ENCODE measurements at regions of chr15 and their contacts with region 1.

Region 1: GRCh38 chr15:57732526-57733331 is 26.2 kb downstream of the POLR2M start:
- DNase-seq: peak; percentile 55
- CTCF ChIP-seq: peak; percentile 85

Region 2: GRCh38 chr15:57706405-57707209 is 26.1 kb before region 1 on chr15 and contains the start of gene POLR2M:
- CTCF ChIA-PET with region 1: interaction called, 28 read pairs
- POLR2A ChIA-PET with region 1: no interaction called
- DNase-seq: peak; percentile 89
- CTCF ChIP-seq: no peak

Region 3: GRCh38 chr15:57720867-57721266 is 11.9 kb before region 1 on chr15:
- CTCF ChIA-PET with region 1: interaction called, 33 read pairs
- POLR2A ChIA-PET with region 1: no interaction called
- DNase-seq: no peak
- CTCF ChIP-seq: no peak

Region 4: GRCh38 chr15:57751177-57751800 is 18.6 kb after region 1 on chr15:
- CTCF ChIA-PET with region 1: interaction called, 93 read pairs
- POLR2A ChIA-PET with region 1: no interaction called
- DNase-seq: peak; percentile 26
- CTCF ChIP-seq: peak; percentile 43

Region 5: DNA sequence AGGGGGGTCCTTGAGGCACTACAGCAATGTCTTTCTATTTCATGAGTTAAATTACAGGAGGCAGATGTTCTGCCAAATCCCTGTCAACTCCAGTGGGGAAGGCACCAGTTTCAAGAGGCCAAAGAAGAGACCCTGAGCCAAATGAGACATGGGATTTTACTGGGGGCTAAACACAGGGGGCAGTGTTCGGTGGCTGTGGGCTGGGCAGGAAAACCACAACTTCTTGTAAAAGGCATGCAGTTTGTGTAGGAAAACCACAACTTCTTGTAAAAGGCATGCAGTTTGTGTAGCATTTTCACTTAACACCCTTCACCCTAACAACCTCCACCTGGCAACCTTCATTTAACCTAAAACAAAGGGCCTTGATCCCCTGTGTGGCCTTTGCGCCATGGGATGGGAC is 34.8 kb after region 1 on chr15:
- CTCF ChIA-PET with region 1: interaction called, 11 read pairs
- POLR2A ChIA-PET with region 1: no interaction called
- DNase-seq: no peak
- CTCF ChIP-seq: no peak